ENCODE measurements at regions of chr3 and their contacts with region 1.

Region 1: DNA sequence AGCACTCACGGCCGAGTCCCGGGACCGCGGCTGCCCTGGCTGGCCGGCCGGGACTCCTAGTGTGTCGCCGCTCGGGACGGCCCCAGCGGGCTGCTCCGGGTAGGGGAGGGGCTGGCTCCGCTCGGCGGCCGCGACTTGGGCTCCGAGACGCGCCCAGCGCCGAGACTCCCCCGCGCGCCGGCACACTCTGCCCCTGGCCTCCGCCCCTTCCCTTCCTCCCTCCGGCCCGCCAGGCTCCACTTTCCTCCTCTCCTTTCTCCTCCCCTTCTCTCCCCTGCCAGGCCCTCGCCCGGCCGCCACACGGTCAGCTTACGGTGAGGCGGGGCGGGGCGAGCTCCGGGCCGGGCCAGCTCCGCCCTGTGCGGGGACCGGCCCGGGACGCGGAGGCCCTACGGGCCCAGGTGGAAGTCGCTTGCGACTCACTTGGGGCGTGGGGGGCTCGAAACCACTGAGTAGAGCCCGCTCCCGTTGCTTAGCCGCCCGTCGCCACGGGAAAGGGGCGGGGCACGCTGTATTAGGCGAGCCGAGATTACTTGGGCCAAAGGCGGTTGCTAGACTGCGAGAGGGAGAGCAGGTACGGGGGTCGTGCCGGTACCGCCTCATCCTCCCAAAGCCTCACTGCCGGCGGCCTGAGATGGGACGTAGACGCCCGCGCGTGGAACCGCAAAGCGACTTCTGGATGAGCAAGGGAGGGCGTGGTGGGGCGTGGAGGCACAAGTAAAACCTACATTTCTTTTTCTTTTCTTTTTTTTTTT is at the start of gene ITGB5:
- DNase-seq: peak; percentile 88 to 94 (median 94)
- ATAC-seq: peak; percentile 92 to 95
- H3K4me3 ChIP-seq: peak within 1 kb of the TSS; percentile 86
- H3K27ac ChIP-seq: peak within 1 kb of the TSS; percentile 26
- H3K4me1 ChIP-seq: peaks cover 3% of the 10 kb centered on the region
- H3K27me3 ChIP-seq: no peaks in the 10 kb centered on the region
- total RNA-seq, gene ITGB5: 107 to 170 (median 126) TPM

Region 2: DNA sequence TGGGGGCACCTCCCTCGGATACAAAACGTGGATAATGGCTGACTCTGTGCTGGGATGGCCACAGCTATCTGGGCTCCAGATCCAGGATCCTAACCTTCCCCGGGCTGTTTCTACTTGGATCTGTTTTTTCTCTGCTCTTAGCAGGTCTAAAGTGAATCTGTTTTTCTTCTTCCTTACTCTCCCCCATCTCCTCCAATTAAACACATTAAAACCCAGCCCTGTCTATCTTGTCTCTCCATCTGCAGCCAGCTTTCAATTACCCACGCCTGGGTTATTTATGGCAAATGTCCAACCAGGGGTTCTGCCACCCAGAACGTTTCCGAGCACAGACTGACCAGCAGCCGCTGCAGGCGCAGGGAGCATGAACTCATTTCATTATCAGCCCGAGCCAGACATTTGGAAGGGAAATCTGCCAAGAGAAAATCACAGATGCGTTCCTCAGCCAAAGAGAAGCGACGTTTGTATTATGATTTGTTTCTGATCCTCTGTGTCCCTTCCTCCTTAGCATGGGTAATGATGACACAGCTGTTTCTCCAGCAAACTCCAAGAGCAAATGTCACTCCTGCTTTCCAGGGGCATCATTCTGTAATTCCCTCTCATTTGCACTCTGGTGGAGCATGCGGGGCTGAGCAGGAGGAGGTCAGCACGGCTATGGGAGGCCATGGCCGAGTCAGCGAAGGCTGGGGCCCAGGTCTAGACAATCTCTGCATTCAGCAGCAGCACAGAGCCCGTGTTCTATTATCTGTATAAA is 115.1 kb before region 1 on chr3:
- intact Hi-C with region 1: loop called in 1 of 4 experiments (anchors 5 kb)
- DNase-seq: peak; percentile 59 to 81 (median 78)
- ATAC-seq: peak; percentile 53 to 73
- H3K4me3 ChIP-seq: no peak overlapping the region
- H3K27ac ChIP-seq: peak overlapping the region; percentile 74
- H3K4me1 ChIP-seq: peaks cover 17% of the 10 kb centered on the region
- H3K27me3 ChIP-seq: no peaks in the 10 kb centered on the region

Region 3: DNA sequence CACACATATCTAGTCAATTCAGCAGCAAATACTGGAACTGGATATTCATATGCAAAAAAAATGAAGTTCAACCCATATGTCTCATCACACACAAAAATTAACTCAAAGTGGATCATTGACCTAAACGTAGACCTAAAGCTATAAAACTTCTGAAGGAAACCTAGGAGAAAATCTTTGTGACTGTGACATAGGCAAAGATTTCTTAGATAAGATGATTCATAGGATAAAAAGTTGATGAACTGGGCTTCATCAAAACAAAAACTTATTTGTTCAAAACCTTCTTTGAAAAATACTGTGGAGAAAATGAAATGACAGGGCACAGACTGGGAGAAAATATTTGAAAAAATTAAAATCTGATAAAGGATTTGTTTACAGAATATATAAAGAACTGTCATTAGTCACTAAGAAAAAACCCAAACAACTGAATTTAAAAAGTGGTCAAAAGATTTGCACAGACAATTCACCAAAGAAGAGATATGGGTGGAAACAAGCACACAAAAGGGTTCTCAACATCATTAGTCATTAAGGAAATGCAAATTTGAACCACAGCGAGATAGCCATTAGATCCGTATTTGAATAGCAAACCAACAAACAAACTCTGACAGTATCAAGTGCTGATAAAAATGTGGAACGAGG is 63.0 kb before region 1 on chr3:
- intact Hi-C with region 1: no loop called
- DNase-seq: no peak
- ATAC-seq: no peak
- H3K4me3 ChIP-seq: no peak overlapping the region
- H3K27ac ChIP-seq: no peak overlapping the region
- H3K4me1 ChIP-seq: peaks cover 1% of the 10 kb centered on the region
- H3K27me3 ChIP-seq: no peaks in the 10 kb centered on the region

Region 4: DNA sequence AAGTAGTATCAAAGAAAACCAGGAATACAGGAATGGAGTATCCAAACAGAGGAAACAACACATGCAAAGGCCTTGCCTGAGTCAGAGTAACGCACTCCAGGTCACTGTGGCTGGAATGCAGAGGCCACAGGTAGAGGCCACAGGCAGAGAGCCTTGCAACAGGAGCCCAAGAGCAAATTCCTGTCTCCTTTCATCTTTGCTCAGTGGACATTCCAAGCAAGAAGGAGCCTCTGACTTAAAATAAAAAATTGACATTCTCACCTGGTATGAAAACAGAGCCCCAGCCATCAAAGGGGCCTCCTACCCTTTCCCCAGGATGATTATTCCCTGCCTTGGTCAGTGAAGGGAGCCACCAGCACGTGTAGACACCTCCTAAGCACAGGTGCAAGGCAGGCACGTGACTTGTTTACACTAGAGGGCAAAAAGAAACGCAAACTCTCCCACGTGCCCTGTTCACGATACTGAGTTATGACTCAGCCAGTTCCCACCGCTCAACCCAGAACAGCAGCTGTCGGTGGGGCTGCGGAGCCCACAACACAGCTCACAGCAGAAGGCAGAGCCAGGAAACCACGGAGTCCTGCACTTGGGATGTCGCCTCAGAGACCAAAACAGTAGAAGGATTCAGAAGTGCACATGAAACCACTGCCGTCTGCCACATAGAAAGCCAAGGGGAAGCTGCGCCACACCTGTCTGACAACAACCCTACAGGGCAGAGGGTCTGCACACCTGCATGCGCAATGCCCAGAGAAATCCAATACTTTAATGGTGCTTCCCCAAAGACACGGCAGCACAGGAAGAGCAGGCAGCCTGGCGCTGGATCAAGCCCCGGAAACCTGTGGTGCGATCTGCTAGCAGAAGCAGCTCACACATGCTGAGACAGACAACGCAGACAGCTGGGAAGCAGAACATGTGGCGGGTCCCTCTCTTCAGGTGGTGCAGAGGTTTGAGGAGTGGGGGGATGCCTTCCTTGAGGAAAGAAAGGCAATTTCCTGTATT is 52.3 kb before region 1 on chr3:
- intact Hi-C with region 1: loop called in 1 of 4 experiments (anchors 5 kb)
- DNase-seq: peak in 2 of 3 donors; percentile 63 to 72
- ATAC-seq: peak; percentile 27 to 36
- H3K4me3 ChIP-seq: no peak overlapping the region
- H3K27ac ChIP-seq: peak overlapping the region; percentile 34
- H3K4me1 ChIP-seq: peaks cover 26% of the 10 kb centered on the region
- H3K27me3 ChIP-seq: no peaks in the 10 kb centered on the region

Region 5: GRCh38 chr3:124845406-124845805 is 41.9 kb before region 1 on chr3:
- intact Hi-C with region 1: loop called in 1 of 4 experiments (anchors 5 kb)
- DNase-seq: peak; percentile 74 to 83 (median 74)
- ATAC-seq: peak; percentile 84 to 90
- H3K4me3 ChIP-seq: no peak overlapping the region
- H3K27ac ChIP-seq: peak overlapping the region; percentile 87
- H3K4me1 ChIP-seq: peaks cover 6% of the 10 kb centered on the region
- H3K27me3 ChIP-seq: no peaks in the 10 kb centered on the region

Measured in right cardiac atrium (tissue), 5 donors.